SK-N-SH (cell line): ENCODE measurements at regions of chr7 and their contacts with region 1.

Region 1: DNA sequence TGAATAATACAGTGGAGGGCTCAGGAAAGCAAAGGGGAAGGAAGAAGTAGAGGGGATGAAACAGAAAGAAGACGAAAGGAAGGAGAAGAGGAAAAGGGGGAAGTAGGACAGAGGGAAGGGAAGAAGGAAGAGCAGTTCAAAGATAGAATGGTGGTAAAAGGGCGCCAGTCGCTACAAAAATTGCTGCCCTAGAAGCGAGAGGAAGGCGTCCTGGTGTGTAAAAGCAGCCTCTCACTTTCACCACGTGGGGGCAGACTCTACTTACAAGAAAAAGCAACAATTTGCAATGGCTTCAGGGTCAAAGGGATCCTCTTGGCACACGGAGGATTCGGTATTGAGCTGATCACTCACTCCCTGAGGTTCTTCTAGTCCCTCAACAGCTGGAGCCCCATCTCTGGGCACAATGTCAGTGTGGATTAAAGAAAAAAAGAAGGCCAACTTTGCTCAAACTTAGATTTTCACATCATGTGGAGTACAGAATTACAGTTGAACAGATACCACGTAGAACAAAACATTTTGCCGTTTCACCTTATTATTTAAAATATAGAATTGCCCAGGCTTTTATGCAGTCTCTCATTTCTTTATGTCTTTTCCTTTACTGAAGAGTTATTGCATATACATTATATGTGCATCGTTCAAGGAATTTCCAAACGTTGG is 31.4 kb upstream of the NPVF start:
- DNase-seq: peak; percentile 79
- H3K4me3 ChIP-seq: peak overlapping the region in 1 of 2 experiments; percentile 15; a peak in 1 of 4 replicates
- H3K27ac ChIP-seq: no peak overlapping the region
- H3K4me1 ChIP-seq: peaks cover 0 to 4% of the 10 kb centered on the region in 2 experiments; a peak in 2 of 4 replicates
- H3K27me3 ChIP-seq: peaks cover 10% of the 10 kb centered on the region; the same call in 1 of the 2 replicates
- CTCF ChIP-seq: peak; percentile 94
- EP300 ChIP-seq: no peak
- RAD21 ChIP-seq: peak; percentile 99

Region 2: DNA sequence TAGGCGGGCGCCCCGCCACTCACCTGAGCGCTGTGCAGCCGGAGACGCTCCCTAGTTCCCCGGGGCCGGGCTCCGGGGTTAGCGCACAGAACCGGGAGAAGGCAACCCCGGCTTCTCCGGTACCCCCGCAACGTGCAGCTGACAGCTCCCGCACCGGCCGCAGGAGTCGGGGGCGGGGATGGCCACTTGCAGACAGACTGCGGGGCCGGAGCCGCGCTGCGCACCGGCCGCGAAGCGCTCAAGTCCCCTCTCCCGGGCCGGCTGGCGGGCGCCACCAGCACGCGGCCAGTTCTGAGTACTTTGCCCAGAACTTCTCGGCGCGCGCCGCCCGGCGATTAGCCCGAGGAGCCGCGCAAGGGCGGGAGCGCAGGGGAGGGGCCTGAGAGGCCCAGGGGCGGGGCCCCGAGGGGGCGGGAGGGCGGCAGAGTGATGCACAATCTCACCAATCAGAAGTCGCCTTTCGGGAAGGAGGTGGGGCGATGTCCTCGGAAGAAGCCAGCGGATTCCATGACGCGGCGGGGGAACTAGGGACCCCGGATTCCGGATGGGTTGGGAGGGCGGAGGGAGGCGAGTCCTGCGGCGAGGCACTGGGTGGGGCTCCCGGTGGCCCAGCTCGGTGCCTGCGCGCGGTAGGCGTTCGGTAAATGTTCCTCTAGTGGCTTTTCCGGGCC is 279.7 kb before region 1 on chr7 and contains the start of gene OSBPL3:
- CTCF ChIA-PET with region 1: no interaction called
- POLR2A ChIA-PET with region 1: no interaction called
- DNase-seq: peak; percentile 100
- H3K4me3 ChIP-seq: peak within 1 kb of the TSS; percentile 73 to 97
- H3K27ac ChIP-seq: peak within 1 kb of the TSS; percentile 84 to 87
- H3K4me1 ChIP-seq: peaks cover 21 to 28% of the 10 kb centered on the region in 2 experiments; a peak in 3 of 4 replicates
- H3K27me3 ChIP-seq: no peaks in the 10 kb centered on the region
- CTCF ChIP-seq: no peak
- EP300 ChIP-seq: peak in 1 of 2 experiments; percentile 2; a peak in 1 of 4 replicates
- RAD21 ChIP-seq: peak; percentile 38
- polyA plus RNA-seq, gene OSBPL3: 22.6 and 23.2 TPM in 2 replicates

Region 3: GRCh38 chr7:25158966-25159365 is 100.7 kb before region 1 on chr7:
- CTCF ChIA-PET with region 1: no interaction called
- POLR2A ChIA-PET with region 1: no interaction called
- DNase-seq: no peak
- H3K4me3 ChIP-seq: no peak overlapping the region
- H3K27ac ChIP-seq: no peak overlapping the region
- H3K4me1 ChIP-seq: no peaks in the 10 kb centered on the region; a peak in 1 of 4 replicates
- H3K27me3 ChIP-seq: no peaks in the 10 kb centered on the region
- CTCF ChIP-seq: no peak
- EP300 ChIP-seq: no peak
- RAD21 ChIP-seq: no peak

Region 4: DNA sequence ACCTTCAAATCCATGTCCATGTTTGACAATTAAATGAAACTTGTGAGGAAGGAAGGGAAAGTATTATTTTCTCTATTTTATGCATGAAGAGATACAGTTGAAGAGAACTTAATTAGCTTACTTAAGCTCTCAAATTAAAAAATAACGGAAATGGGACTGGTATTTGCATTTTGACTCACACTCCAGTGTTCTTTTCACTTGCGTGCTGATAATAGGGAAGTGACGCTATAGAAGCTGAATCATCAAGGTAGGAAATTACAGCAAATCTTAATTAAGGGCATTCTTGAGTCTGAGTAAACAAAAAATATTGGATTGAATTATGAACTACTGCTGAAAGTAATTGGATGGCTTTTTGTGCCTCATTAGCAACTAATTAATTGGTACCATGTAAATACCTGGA is 12.6 kb after region 1 on chr7:
- CTCF ChIA-PET with region 1: interaction called, 46 read pairs
- POLR2A ChIA-PET with region 1: no interaction called
- DNase-seq: no peak
- H3K4me3 ChIP-seq: no peak overlapping the region
- H3K27ac ChIP-seq: no peak overlapping the region
- H3K4me1 ChIP-seq: no peaks in the 10 kb centered on the region; a peak in 1 of 4 replicates
- H3K27me3 ChIP-seq: no peaks in the 10 kb centered on the region
- CTCF ChIP-seq: no peak
- EP300 ChIP-seq: no peak
- RAD21 ChIP-seq: no peak

Region 5: GRCh38 chr7:25359471-25360059 is 99.8 kb after region 1 on chr7:
- CTCF ChIA-PET with region 1: interaction called, 13 read pairs
- POLR2A ChIA-PET with region 1: no interaction called
- DNase-seq: peak; percentile 62
- H3K4me3 ChIP-seq: no peak overlapping the region
- H3K27ac ChIP-seq: no peak overlapping the region
- H3K4me1 ChIP-seq: peaks cover 0 to 11% of the 10 kb centered on the region in 2 experiments; a peak in 2 of 4 replicates
- H3K27me3 ChIP-seq: no peaks in the 10 kb centered on the region
- CTCF ChIP-seq: no peak
- EP300 ChIP-seq: no peak
- RAD21 ChIP-seq: no peak

Region 6: DNA sequence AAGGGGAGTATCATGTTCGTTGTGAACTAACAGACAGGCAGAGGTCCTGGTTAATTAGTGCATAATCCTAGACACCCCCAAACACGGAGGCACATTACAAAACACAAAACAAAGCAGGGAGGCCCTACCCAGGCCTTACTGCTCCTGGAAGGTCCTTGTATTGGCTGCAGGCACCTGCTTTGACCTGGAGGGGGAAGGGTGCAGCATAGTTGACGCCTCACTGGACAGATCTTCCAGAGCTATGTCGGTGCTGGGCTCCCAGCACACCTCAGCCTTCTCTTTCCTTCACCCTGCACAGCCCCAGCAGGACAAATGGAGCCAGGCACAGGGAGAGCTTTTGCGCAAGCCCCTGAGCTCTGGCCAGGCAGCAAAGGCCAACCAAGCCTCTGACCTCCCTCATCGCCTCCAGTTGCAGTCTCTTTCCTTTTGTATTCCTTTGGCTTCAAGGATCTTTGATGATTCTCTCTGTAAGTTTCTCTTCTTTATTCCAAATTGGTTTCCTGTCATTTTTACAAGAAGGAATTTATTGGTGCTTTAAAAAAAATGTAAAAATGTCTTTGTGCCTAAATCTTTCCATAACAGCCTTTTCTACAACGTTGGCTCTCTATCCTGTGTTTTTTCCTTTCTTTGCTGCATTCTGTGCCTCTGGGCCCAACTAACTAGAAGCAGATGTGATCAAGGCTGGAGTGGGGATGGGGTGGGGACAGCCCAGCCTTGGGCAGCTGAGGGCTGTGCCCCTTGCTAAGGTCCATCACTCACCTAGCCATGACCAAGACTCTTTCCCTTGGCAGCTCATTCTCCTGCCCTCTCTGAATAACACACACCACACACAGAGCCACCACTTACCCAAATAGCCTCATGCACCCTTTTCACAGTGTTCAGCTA is 285.7 kb after region 1 on chr7:
- CTCF ChIA-PET with region 1: interaction called, 12 read pairs
- POLR2A ChIA-PET with region 1: no interaction called
- DNase-seq: peak; percentile 65
- H3K4me3 ChIP-seq: no peak overlapping the region
- H3K27ac ChIP-seq: peak overlapping the region in 1 of 2 experiments; percentile 28; a peak in 2 of 4 replicates
- H3K4me1 ChIP-seq: peaks cover 0 to 15% of the 10 kb centered on the region in 2 experiments; a peak in 1 of 4 replicates
- H3K27me3 ChIP-seq: no peaks in the 10 kb centered on the region
- CTCF ChIP-seq: no peak
- EP300 ChIP-seq: no peak
- RAD21 ChIP-seq: no peak